Body of pancreas (tissue), 4 donors: ENCODE measurements at regions of chr7 and their contacts with region 1.

Region 1: GRCh38 chr7:51366930-51367613 is 50.5 kb upstream of the COBL start:
- DNase-seq: peak; percentile 55 to 67 (median 62)
- ATAC-seq: peak; percentile 95
- H3K4me3 ChIP-seq: no peak overlapping the region
- H3K27ac ChIP-seq: no peak overlapping the region
- H3K4me1 ChIP-seq: peaks cover 6% of the 10 kb centered on the region
- H3K27me3 ChIP-seq: no peaks in the 10 kb centered on the region
- CTCF ChIP-seq: peak; percentile 65 to 93 (median 89)
- POLR2A ChIP-seq: no peak

Region 2: GRCh38 chr7:51102828-51103227 is 264.2 kb before region 1 on chr7:
- intact Hi-C with region 1: no loop called
- DNase-seq: no peak
- ATAC-seq: no peak
- H3K4me3 ChIP-seq: no peak overlapping the region
- H3K27ac ChIP-seq: no peak overlapping the region
- H3K4me1 ChIP-seq: peaks cover 19% of the 10 kb centered on the region
- H3K27me3 ChIP-seq: no peaks in the 10 kb centered on the region
- CTCF ChIP-seq: no peak
- POLR2A ChIP-seq: no peak

Region 3: GRCh38 chr7:51123322-51124029 is 243.6 kb before region 1 on chr7:
- intact Hi-C with region 1: no loop called
- DNase-seq: peak in 2 of 4 donors; percentile 29 to 62
- ATAC-seq: no peak
- H3K4me3 ChIP-seq: no peak overlapping the region
- H3K27ac ChIP-seq: no peak overlapping the region
- H3K4me1 ChIP-seq: peaks cover 6% of the 10 kb centered on the region
- H3K27me3 ChIP-seq: no peaks in the 10 kb centered on the region
- CTCF ChIP-seq: no peak
- POLR2A ChIP-seq: no peak

Region 4: DNA sequence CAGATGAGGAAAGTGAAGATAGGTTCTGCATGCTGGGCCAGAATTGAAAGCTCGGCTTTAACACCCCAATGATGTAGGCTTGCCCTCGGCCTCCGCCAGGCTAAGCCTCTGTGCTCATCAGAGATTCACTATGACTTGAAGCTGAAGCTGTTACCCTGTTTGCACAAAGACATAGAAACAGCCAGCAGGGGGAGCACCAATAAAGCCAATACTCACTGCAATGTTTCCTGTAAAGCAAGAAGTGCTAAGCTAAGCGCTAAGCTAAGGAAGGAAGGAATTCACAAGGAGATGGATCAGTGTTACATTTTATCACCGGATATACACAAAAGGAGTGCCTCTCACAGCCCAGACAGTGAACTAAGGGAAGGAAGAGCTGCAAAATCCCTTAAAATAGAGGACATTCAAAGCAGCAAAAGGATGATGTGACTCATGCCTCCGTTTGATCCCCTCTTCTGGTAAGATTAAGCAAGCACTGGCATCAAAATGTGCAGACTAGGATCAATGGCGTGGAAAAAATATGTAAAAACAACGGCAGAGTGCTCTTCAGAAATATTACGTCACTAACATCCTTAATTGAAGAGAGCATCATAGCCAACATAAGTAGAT is 204.2 kb before region 1 on chr7:
- intact Hi-C with region 1: loop called (anchors 5 kb)
- DNase-seq: peak; percentile 81 to 86 (median 84)
- ATAC-seq: peak; percentile 84
- H3K4me3 ChIP-seq: no peak overlapping the region
- H3K27ac ChIP-seq: no peak overlapping the region
- H3K4me1 ChIP-seq: no peaks in the 10 kb centered on the region
- H3K27me3 ChIP-seq: no peaks in the 10 kb centered on the region
- CTCF ChIP-seq: peak; percentile 58 to 90 (median 79)
- POLR2A ChIP-seq: no peak

Region 5: GRCh38 chr7:51224811-51225612 is 142.1 kb before region 1 on chr7:
- intact Hi-C with region 1: loop called (anchors 10 kb)
- DNase-seq: peak; percentile 67 to 79 (median 76)
- ATAC-seq: peak; percentile 80
- H3K4me3 ChIP-seq: no peak overlapping the region
- H3K27ac ChIP-seq: no peak overlapping the region
- H3K4me1 ChIP-seq: peaks cover 6% of the 10 kb centered on the region
- H3K27me3 ChIP-seq: no peaks in the 10 kb centered on the region
- CTCF ChIP-seq: peak; percentile 34 to 82 (median 59)
- POLR2A ChIP-seq: no peak

Region 6: DNA sequence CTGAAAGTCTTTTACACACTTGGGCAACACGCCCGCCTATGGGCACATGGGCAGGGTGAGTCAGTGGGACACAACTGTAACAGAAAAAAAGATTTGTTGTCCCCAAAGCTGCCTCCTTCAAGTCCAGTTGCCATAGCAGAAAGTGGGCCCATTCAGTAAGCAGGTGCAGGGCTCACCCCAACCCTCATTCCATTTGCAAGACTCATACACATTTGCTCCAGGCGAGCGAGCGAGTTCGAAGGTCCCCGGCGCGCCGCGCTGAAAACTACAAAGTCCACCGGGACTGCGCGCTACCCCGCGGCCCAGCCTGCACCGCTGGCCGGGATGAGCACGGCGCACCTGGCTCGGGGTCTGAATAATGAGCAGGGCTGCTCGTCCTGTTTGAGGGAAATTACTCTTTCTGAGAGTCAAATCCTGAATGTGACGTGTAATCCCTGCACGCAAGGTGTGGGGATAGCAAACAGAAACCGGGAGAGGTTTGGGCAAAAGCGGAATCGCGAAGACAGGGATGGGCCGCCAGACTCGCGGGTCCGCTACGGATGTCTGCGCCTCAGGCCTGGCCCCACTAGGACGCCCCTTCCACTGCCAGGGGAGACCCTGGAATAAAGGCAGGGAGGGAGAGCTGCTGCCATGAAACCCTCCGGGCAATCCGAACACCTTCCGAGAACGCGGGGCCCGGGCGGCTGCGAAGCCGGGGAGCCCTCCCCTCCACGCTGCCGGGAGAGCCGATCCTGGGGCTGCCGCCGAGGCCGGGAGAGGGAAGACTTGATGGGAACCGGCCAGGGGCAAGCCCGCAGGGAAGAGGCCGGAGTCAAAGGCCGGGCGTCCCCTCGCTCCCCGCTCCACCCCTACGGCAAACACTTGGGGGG is 51.4 kb before region 1 on chr7:
- intact Hi-C with region 1: loop called (anchors 10 kb)
- DNase-seq: peak; percentile 66 to 78 (median 70)
- ATAC-seq: peak; percentile 60
- H3K4me3 ChIP-seq: peak overlapping the region; percentile 67 to 68
- H3K27ac ChIP-seq: peak overlapping the region; percentile 76 to 96 (median 93)
- H3K4me1 ChIP-seq: peaks cover 46% of the 10 kb centered on the region
- H3K27me3 ChIP-seq: no peaks in the 10 kb centered on the region
- CTCF ChIP-seq: no peak
- POLR2A ChIP-seq: peak; percentile 28 to 80 (median 69)